ENCODE measurements at regions of chr5 and their contacts with region 1.

Region 1: GRCh38 chr5:149932445-149933350 is 11.9 kb downstream of the PDE6A start:
- DNase-seq: peak in 1 of 2 experiments; percentile 59
- H3K4me3 ChIP-seq: peak overlapping the region; percentile 57
- H3K27ac ChIP-seq: no peak overlapping the region
- H3K4me1 ChIP-seq: peaks cover 27% of the 10 kb centered on the region
- H3K27me3 ChIP-seq: no peaks in the 10 kb centered on the region
- CTCF ChIP-seq: peak; percentile 61

Region 2: DNA sequence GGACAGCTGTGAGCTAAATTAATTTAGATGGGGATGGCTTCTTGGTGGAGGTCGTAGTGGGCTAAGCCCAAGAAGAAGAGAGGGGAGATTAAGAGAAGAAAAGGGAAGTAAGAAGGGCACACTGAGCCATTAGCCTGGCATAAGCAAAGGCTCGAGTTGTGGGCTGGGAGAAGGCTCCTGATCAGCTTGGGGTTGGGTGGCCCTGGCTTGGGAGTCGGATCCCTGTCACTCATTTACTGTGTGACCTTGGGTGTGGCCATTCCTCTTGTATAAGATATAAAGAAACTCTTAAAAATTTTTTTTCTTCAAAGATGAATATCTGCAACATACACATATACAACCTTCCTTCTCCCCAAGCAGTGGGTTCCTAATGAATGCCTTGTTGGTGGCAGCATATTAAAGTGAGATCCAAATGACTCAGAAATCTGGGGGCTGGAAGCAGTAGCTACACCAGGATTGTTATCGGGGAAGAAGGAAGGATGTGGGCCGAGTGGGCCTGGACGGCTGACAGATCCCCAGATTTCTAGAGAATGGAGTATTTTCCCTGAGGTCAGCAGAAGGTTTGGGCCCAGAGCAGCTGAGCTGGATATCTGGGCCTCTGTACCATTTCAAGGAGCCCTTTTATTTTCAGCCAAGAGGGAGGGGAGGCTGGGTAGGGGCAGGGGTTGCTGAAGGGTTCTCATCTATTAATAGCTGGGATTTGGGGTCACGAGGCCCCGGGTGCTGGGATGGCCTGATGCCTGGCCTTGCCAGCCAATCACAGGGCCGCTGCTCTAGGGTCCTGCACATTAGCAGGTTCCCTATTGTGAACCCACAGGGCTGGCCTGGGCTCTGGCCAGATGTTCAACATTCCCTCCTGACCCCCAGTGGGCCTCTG is 150.4 kb before region 1 on chr5:
- CTCF ChIA-PET with region 1: no interaction called
- POLR2A ChIA-PET with region 1: no interaction called
- intact Hi-C with region 1: no loop called
- DNase-seq: no peak
- H3K4me3 ChIP-seq: no peak overlapping the region
- H3K27ac ChIP-seq: no peak overlapping the region
- H3K4me1 ChIP-seq: peaks cover 38% of the 10 kb centered on the region
- H3K27me3 ChIP-seq: no peaks in the 10 kb centered on the region
- CTCF ChIP-seq: no peak

Region 3: DNA sequence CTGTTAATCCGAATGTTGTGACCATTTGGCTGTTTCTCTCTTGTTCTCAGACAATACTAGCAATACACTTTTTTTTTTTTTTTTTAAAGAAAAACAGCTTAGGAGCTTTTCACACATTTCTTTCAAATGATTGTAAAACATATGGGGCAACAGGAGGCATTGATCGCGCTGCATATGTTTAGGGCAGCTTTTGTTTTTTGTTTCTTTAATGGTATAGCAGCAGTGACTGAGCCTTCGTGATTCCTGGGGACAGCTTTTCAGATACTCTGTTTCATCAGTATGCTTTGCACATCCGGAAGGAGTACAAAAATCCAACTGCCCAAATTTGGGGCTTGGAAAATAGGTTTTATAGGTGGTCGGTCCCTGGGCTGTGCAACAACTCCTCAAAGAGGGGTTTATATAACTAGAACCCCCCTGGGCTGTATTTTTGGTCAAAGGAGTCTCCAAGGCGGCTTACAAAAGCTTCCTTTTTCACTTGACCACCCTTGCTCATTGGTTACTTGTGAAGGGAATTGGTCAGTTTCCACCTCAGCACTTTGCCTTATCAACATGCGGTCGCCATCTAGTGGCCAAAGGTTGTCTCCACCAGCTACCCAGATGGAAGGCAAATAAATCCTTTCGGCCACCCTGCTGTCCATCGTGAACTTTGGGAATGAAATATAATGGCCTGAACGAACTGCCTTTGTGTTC is 79.9 kb before region 1 on chr5:
- CTCF ChIA-PET with region 1: interaction called, 3 read pairs
- POLR2A ChIA-PET with region 1: no interaction called
- intact Hi-C with region 1: loop called (anchors 2 kb)
- DNase-seq: peak; percentile 50 to 71
- H3K4me3 ChIP-seq: no peak overlapping the region
- H3K27ac ChIP-seq: no peak overlapping the region
- H3K4me1 ChIP-seq: no peaks in the 10 kb centered on the region
- H3K27me3 ChIP-seq: no peaks in the 10 kb centered on the region
- CTCF ChIP-seq: peak; percentile 89

Region 4: GRCh38 chr5:149990518-149991376 is 58.0 kb after region 1 on chr5:
- CTCF ChIA-PET with region 1: interaction called, 4 read pairs
- POLR2A ChIA-PET with region 1: no interaction called
- intact Hi-C with region 1: loop called (anchors 2 kb)
- DNase-seq: peak; percentile 62 to 70
- H3K4me3 ChIP-seq: no peak overlapping the region
- H3K27ac ChIP-seq: no peak overlapping the region
- H3K4me1 ChIP-seq: peaks cover 15% of the 10 kb centered on the region
- H3K27me3 ChIP-seq: no peaks in the 10 kb centered on the region
- CTCF ChIP-seq: peak; percentile 97

Measured in PC-9 (cell line).